Activated B cell treated with CpG ODN at 0.5 μM for 24 hours (primary cell): ENCODE measurements at regions of chr3 and their contacts with region 1.

Region 1: DNA sequence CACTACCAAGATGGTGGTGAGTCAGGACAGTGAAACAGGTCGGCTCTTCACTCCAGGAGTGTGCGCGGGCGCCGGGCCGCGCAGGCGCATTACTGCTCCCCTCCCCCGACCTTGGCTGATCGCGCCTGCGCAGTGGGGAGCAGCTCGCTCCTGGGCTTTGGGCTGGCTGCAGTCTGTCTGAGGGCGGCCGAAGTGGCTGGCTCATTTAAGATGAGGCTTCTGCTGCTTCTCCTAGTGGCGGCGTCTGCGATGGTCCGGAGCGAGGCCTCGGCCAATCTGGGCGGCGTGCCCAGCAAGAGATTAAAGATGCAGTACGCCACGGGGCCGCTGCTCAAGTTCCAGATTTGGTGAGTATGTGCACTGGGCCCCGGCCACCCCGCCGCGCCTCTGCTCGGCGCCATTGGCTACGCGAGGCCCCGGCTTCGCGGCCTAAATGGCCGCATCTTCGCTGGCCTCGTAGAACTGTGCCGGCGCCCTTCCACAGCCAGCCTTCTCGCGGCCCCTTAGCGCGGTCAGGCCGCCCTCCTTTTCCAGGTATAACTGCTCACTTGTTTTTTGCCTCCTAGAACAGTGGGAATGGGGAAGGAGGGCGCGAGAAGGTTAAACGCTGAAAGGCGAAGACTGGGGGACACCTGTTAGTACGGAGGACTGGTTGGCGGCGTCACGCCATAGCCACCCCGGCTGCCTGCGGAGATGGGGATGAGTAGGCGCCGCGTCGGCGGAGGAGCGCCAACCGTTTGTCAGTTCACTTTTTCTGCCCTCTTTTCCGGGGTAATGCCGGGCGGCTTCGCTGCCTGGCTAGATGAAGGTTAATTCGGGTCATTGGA is at the start of gene SELENOT:
- DNase-seq: peak; percentile 94
- ATAC-seq: peak; percentile 62
- H3K4me3 Mint-ChIP-seq: peak within 1 kb of the TSS; percentile 100
- H3K27ac Mint-ChIP-seq: peak within 1 kb of the TSS; percentile 100
- H3K4me1 Mint-ChIP-seq: peaks cover 87% of the 10 kb centered on the region
- H3K27me3 Mint-ChIP-seq: no peaks in the 10 kb centered on the region
- CTCF ChIP-seq: no peak
- total RNA-seq, gene SELENOT: 137 and 145 TPM in 2 replicates

Region 2: DNA sequence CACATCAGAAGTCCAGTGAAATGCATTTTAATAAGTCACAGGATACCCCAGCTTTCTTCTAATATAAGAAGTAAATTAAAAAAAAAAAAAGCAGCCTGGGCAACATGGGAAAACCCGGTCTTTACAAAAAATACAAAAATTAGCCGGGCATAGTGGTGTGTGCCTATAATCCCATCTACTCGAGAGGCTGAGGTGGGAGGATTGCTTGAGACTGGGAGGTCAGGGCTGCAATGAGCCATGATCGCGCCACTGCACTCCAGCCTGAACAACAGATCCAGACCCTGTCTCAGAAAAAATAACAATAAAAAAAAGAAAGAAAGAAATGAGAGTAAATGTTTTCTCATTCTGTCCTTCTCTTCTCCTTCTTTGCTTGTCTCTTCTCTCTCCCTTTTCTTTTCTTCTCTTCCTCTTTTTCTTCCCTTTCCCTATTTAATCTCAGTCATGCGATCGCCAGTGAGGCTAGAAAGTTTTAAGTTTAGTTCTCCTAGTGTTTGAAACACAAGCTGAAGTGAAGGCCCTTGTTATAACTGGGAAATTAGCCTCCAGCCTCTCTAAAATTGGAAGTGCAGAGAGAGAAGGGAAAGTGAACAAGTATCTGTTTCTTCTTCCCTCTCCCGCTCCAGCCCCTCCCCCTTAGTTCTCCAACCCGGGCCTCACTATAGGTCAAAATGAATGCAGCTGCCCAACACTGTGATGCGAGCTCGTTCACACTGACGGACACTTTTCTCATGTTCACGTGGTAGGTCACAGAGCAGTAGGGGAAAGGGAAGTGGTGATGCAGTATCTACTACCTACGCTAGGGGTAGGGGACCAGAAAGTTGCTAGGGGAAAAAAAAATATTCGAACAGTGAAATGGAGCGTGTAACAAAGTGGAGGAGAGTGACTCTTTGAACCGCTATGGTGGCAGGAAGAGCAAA is 218.8 kb before region 1 on chr3:
- CTCF ChIA-PET with region 1: no interaction called
- POLR2A ChIA-PET with region 1: interaction called, 4 read pairs
- intact Hi-C with region 1: loop called (anchors 1 kb)
- DNase-seq: peak; percentile 47
- ATAC-seq: peak; percentile 95
- H3K4me3 Mint-ChIP-seq: peak overlapping the region; percentile 84
- H3K27ac Mint-ChIP-seq: peak overlapping the region; percentile 98
- H3K4me1 Mint-ChIP-seq: peaks cover 42% of the 10 kb centered on the region
- H3K27me3 Mint-ChIP-seq: no peaks in the 10 kb centered on the region
- CTCF ChIP-seq: no peak

Region 3: DNA sequence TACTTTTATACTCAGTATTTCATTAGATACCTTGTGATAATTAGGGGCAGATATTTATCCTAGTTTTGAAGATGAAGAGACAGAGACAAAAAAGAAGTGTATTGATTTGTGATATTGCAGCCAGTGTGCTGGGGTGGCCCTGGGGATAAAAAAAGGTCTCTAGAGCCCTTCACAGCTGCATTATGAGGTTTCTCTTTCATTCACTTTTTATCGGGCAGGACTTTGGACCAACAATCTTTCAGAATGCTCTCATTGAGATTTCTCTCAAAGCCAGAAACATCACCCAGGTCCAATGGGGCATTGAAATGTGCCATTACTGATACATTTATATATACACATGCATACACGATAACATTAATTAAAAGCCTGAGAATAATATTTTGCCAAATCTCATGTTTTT is 20.7 kb before region 1 on chr3:
- CTCF ChIA-PET with region 1: no interaction called
- POLR2A ChIA-PET with region 1: interaction called, 7 read pairs
- intact Hi-C with region 1: loop called (anchors 2 kb)
- DNase-seq: no peak
- ATAC-seq: no peak
- H3K4me3 Mint-ChIP-seq: no peak overlapping the region
- H3K27ac Mint-ChIP-seq: peak overlapping the region; percentile 12
- H3K4me1 Mint-ChIP-seq: peaks cover 7% of the 10 kb centered on the region
- H3K27me3 Mint-ChIP-seq: no peaks in the 10 kb centered on the region
- CTCF ChIP-seq: no peak

Region 4: GRCh38 chr3:150620002-150620689 is 16.8 kb after region 1 on chr3:
- CTCF ChIA-PET with region 1: no interaction called
- POLR2A ChIA-PET with region 1: interaction called, 3 read pairs
- intact Hi-C with region 1: loop called (anchors 2 kb)
- DNase-seq: no peak
- ATAC-seq: no peak
- H3K4me3 Mint-ChIP-seq: no peak overlapping the region
- H3K27ac Mint-ChIP-seq: no peak overlapping the region
- H3K4me1 Mint-ChIP-seq: peaks cover 31% of the 10 kb centered on the region
- H3K27me3 Mint-ChIP-seq: no peaks in the 10 kb centered on the region
- CTCF ChIP-seq: no peak

Region 5: GRCh38 chr3:150681057-150681456 is 77.7 kb after region 1 on chr3:
- CTCF ChIA-PET with region 1: no interaction called
- POLR2A ChIA-PET with region 1: interaction called, 6 read pairs
- intact Hi-C with region 1: loop called (anchors 1 kb)
- DNase-seq: no peak
- ATAC-seq: peak; percentile 95
- H3K4me3 Mint-ChIP-seq: peak overlapping the region; percentile 80
- H3K27ac Mint-ChIP-seq: peak overlapping the region; percentile 66
- H3K4me1 Mint-ChIP-seq: peaks cover 29% of the 10 kb centered on the region
- H3K27me3 Mint-ChIP-seq: no peaks in the 10 kb centered on the region
- CTCF ChIP-seq: no peak

Region 6: DNA sequence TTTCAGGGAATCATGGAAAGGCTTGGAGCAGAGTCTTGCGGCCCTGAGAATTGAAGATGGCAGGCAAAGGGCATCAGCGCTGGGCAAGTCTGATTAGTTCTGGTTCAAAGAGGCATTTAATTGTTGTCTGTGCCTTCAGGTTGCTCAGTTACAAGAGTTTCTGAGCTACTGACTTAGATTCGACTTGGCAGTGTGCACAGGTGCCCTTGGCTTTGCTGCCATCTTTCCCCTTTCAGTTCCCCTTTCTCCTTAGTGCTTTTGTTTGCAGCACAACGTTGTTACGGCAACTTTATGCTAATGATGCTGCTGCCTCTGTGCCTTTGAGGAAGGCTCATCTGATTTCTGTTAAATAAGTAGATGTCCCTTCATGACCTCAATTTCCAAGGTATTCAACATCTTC is 662.5 kb after region 1 on chr3:
- CTCF ChIA-PET with region 1: no interaction called
- POLR2A ChIA-PET with region 1: no interaction called
- intact Hi-C with region 1: loop called (anchors 2 kb)
- DNase-seq: peak; percentile 44
- ATAC-seq: peak; percentile 87
- H3K4me3 Mint-ChIP-seq: peak overlapping the region; percentile 60
- H3K27ac Mint-ChIP-seq: peak overlapping the region; percentile 98
- H3K4me1 Mint-ChIP-seq: peaks cover 66% of the 10 kb centered on the region
- H3K27me3 Mint-ChIP-seq: no peaks in the 10 kb centered on the region
- CTCF ChIP-seq: no peak